ENCODE measurements at regions of chr11 and their contacts with region 1.

Region 1: GRCh38 chr11:2532704-2533586 is 88.1 kb downstream of the KCNQ1 start:
- DNase-seq: peak; percentile 82 to 88 (median 86)
- H3K4me3 ChIP-seq: no peak overlapping the region
- H3K4me3 Mint-ChIP-seq: peak overlapping the region; percentile 27 to 80 (median 72)
- H3K27ac ChIP-seq: no peak overlapping the region
- H3K27ac Mint-ChIP-seq: peak overlapping the region in 2 of 7 donors; percentile 24 to 37
- H3K4me1 ChIP-seq: peaks cover 14% of the 10 kb centered on the region
- H3K4me1 Mint-ChIP-seq: peaks cover 6 to 20% (median 14%) of the 10 kb centered on the region in 4 donors
- H3K27me3 ChIP-seq: no peaks in the 10 kb centered on the region
- H3K27me3 Mint-ChIP-seq: no peaks in the 10 kb centered on the region

Region 2: GRCh38 chr11:2196970-2197770 is 335.8 kb before region 1 on chr11:
- CTCF ChIA-PET with region 1: interaction called, 3 read pairs
- POLR2A ChIA-PET with region 1: no interaction called
- intact Hi-C with region 1: loop called (anchors 5 kb)
- DNase-seq: peak; percentile 55 to 69 (median 65)
- H3K4me3 ChIP-seq: no peak overlapping the region
- H3K4me3 Mint-ChIP-seq: no peak overlapping the region
- H3K27ac ChIP-seq: no peak overlapping the region
- H3K27ac Mint-ChIP-seq: peak overlapping the region in 3 of 7 donors; percentile 45 to 75 (median 63)
- H3K4me1 ChIP-seq: no peaks in the 10 kb centered on the region
- H3K4me1 Mint-ChIP-seq: peaks cover 0 to 11% (median 5%) of the 10 kb centered on the region in 4 donors
- H3K27me3 ChIP-seq: no peaks in the 10 kb centered on the region
- H3K27me3 Mint-ChIP-seq: peaks cover 1 to 5% of the 10 kb centered on the region in 2 donors

Region 3: GRCh38 chr11:2420502-2421225 is 112.3 kb before region 1 on chr11:
- CTCF ChIA-PET with region 1: interaction called, 104 read pairs
- POLR2A ChIA-PET with region 1: interaction called, 4 read pairs
- intact Hi-C with region 1: no loop called
- DNase-seq: peak; percentile 64 to 73 (median 70)
- H3K4me3 ChIP-seq: no peak overlapping the region
- H3K4me3 Mint-ChIP-seq: peak overlapping the region in 1 of 8 donors; percentile 22
- H3K27ac ChIP-seq: no peak overlapping the region
- H3K27ac Mint-ChIP-seq: no peak overlapping the region
- H3K4me1 ChIP-seq: peaks cover 11% of the 10 kb centered on the region
- H3K4me1 Mint-ChIP-seq: peaks cover 0 to 7% (median 2%) of the 10 kb centered on the region in 4 donors
- H3K27me3 ChIP-seq: no peaks in the 10 kb centered on the region
- H3K27me3 Mint-ChIP-seq: no peaks in the 10 kb centered on the region

Region 4: GRCh38 chr11:2444821-2445745 is 87.9 kb before region 1 on chr11 and contains the start of gene KCNQ1:
- CTCF ChIA-PET with region 1: interaction called, 30 read pairs
- POLR2A ChIA-PET with region 1: interaction called, 8 read pairs
- intact Hi-C with region 1: loop called (anchors 5 kb)
- DNase-seq: peak in 4 of 5 donors; percentile 32 to 38 (median 35)
- H3K4me3 ChIP-seq: peak within 1 kb of the TSS; percentile 6 to 68
- H3K4me3 Mint-ChIP-seq: peak within 1 kb of the TSS; percentile 92 to 97 (median 94)
- H3K27ac ChIP-seq: peak within 1 kb of the TSS; percentile 15
- H3K27ac Mint-ChIP-seq: peak within 1 kb of the TSS; percentile 72 to 85 (median 84)
- H3K4me1 ChIP-seq: peaks cover 57% of the 10 kb centered on the region
- H3K4me1 Mint-ChIP-seq: peaks cover 28 to 57% (median 41%) of the 10 kb centered on the region in 4 donors
- H3K27me3 ChIP-seq: no peaks in the 10 kb centered on the region
- H3K27me3 Mint-ChIP-seq: no peaks in the 10 kb centered on the region
- total RNA-seq, gene KCNQ1: 21.4 to 21.6 TPM

Region 5: GRCh38 chr11:2666401-2666741 is 133.4 kb after region 1 on chr11:
- CTCF ChIA-PET with region 1: no interaction called
- POLR2A ChIA-PET with region 1: no interaction called
- intact Hi-C with region 1: no loop called
- DNase-seq: no peak
- H3K4me3 ChIP-seq: no peak overlapping the region
- H3K4me3 Mint-ChIP-seq: no peak overlapping the region
- H3K27ac ChIP-seq: no peak overlapping the region
- H3K27ac Mint-ChIP-seq: peak overlapping the region in 1 of 7 donors; percentile 22
- H3K4me1 ChIP-seq: no peaks in the 10 kb centered on the region
- H3K4me1 Mint-ChIP-seq: no peaks in the 10 kb centered on the region
- H3K27me3 ChIP-seq: no peaks in the 10 kb centered on the region
- H3K27me3 Mint-ChIP-seq: no peaks in the 10 kb centered on the region

Region 6: DNA sequence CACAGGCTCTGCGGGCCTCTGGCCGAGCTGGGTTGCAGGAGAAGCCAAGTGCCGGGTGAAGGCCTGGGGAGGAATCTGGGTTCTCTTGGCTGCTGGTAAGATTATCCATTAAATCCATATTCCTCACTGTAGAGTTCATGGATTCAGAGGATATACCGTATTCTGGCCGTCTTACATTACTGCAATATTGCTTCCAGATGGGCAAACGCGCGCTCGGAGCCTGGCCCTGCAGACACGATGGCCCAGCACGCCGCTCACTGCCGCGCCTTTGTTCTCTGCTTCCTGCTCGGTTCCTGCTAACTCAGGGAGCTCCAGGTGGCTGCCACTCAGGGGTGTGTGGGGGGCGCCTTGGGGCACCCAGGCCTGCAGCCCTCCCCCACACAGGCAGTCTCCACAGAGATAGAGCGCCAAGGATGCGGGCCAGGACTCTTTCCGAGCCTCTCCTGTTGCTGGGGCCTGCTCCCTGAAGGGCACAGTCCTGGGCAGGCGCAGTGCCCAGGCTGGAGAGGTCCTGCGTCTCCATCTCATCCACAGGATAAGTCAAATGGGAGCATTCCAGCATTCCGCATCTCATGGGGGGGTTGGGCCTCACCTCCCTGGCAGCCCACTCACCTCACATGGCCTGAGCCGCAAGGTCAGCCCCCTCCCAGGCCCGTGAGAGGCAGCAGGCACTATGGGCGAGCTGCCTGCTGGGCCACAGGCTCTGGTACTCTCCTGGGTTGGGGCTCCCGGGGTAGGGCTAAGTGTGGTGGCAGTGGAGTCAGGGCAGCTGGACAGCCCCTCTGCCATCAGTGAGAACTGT is 180.9 kb after region 1 on chr11:
- CTCF ChIA-PET with region 1: no interaction called
- POLR2A ChIA-PET with region 1: no interaction called
- intact Hi-C with region 1: no loop called
- DNase-seq: no peak
- H3K4me3 ChIP-seq: no peak overlapping the region
- H3K4me3 Mint-ChIP-seq: no peak overlapping the region
- H3K27ac ChIP-seq: no peak overlapping the region
- H3K27ac Mint-ChIP-seq: peak overlapping the region in 1 of 7 donors; percentile 48
- H3K4me1 ChIP-seq: no peaks in the 10 kb centered on the region
- H3K4me1 Mint-ChIP-seq: no peaks in the 10 kb centered on the region
- H3K27me3 ChIP-seq: no peaks in the 10 kb centered on the region
- H3K27me3 Mint-ChIP-seq: no peaks in the 10 kb centered on the region

Region 7: DNA sequence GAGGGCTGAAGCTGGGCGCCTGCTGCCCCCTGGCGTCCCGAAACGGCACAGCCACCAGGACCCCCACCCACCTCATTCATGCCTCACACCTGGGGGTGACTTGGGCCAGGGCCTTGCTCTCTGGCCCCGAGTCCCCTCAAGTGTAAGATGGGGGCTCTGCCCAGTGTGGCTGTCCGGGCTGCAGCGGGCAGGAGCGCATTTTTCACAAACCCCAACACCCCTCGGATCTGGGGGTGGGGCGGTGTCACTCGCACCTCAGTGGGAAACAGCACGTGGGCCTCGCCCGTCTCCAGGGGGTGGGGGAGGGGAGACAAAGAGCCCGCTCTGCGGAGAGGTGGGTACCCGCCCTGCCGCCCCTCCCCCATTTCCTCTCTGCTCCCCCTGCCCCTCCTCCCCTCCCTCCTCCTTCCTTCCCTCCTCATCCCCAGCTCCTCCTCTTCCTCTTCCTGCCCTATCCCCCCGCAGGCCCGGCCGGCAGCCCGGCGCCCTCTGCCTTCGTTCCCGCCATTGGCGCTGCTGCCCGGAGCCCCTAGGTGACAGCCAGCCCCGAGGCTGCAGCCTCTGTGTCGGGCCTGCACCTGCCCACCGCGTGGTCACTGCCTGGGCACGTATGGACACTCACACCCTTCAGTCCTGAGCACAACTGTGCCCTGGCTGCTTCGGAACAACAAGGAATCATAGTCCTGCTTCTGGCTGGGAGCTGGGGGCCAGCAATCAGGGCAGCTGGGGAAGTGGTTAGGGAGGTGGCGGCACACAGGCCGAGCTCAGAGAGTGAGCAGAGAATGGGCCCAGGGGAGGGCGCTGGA is 359.5 kb after region 1 on chr11:
- CTCF ChIA-PET with region 1: interaction called, 303 read pairs
- POLR2A ChIA-PET with region 1: interaction called, 17 read pairs
- intact Hi-C with region 1: loop called (anchors 1 kb)
- DNase-seq: peak; percentile 50 to 66 (median 59)
- H3K4me3 ChIP-seq: peak overlapping the region in 1 of 2 donors; percentile 79
- H3K4me3 Mint-ChIP-seq: peak overlapping the region; percentile 73 to 85 (median 78)
- H3K27ac ChIP-seq: peak overlapping the region; percentile 36
- H3K27ac Mint-ChIP-seq: peak overlapping the region; percentile 82 to 93 (median 89)
- H3K4me1 ChIP-seq: peaks cover 35% of the 10 kb centered on the region
- H3K4me1 Mint-ChIP-seq: peaks cover 6 to 39% (median 24%) of the 10 kb centered on the region in 4 donors
- H3K27me3 ChIP-seq: no peaks in the 10 kb centered on the region
- H3K27me3 Mint-ChIP-seq: no peaks in the 10 kb centered on the region

Region 8: DNA sequence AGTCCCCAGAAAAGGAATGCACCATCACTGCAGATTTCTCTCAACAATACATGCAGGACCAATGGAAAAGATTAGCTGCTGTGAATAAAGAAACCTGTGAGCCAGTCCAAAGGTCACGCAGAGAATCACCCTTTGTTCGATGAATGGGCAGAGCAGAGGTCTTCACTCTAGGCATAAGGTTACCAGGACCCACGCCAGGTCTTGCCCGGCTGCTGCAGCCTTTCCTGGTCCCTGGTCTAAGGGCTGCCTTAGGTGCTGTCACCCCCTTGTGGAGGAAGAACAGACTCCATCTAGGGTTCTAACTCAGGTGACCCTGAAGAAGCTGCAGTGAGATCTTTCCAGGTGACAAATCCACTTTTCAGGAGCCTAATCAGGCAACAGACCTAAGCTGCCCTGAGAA is 488.2 kb after region 1 on chr11:
- CTCF ChIA-PET with region 1: interaction called, 14 read pairs
- POLR2A ChIA-PET with region 1: no interaction called
- intact Hi-C with region 1: loop called (anchors 2 kb)
- DNase-seq: peak; percentile 20 to 56 (median 42)
- H3K4me3 ChIP-seq: no peak overlapping the region
- H3K4me3 Mint-ChIP-seq: no peak overlapping the region
- H3K27ac ChIP-seq: no peak overlapping the region
- H3K27ac Mint-ChIP-seq: peak overlapping the region in 2 of 7 donors; percentile 41 to 42
- H3K4me1 ChIP-seq: peaks cover 25% of the 10 kb centered on the region
- H3K4me1 Mint-ChIP-seq: peaks cover 23 to 48% (median 27%) of the 10 kb centered on the region in 4 donors
- H3K27me3 ChIP-seq: no peaks in the 10 kb centered on the region
- H3K27me3 Mint-ChIP-seq: no peaks in the 10 kb centered on the region

Region 9: GRCh38 chr11:3217676-3218482 is 684.9 kb after region 1 on chr11:
- CTCF ChIA-PET with region 1: no interaction called
- POLR2A ChIA-PET with region 1: no interaction called
- intact Hi-C with region 1: loop called (anchors 2 kb)
- DNase-seq: no peak
- H3K4me3 ChIP-seq: no peak overlapping the region
- H3K4me3 Mint-ChIP-seq: no peak overlapping the region
- H3K27ac ChIP-seq: no peak overlapping the region
- H3K27ac Mint-ChIP-seq: no peak overlapping the region
- H3K4me1 ChIP-seq: no peaks in the 10 kb centered on the region
- H3K4me1 Mint-ChIP-seq: peaks cover 0 to 8% (median 3%) of the 10 kb centered on the region in 4 donors
- H3K27me3 ChIP-seq: no peaks in the 10 kb centered on the region
- H3K27me3 Mint-ChIP-seq: peaks cover 8 to 22% of the 10 kb centered on the region in 2 donors